ENCODE measurements at regions of chr3 and their contacts with region 1.

Region 1: GRCh38 chr3:175121225-175121624 is 262.1 kb downstream of the NAALADL2 start:
- DNase-seq: peak; percentile 7
- ATAC-seq: peak; percentile 77
- H3K4me3 ChIP-seq: no peak overlapping the region
- H3K27ac ChIP-seq: no peak overlapping the region
- H3K4me1 ChIP-seq: no peaks in the 10 kb centered on the region
- H3K27me3 ChIP-seq: no peaks in the 10 kb centered on the region
- CTCF ChIP-seq: peak; percentile 17 to 80 (median 57); a peak in 5 of 6 replicates
- POLR2A ChIP-seq: no peak
- RAD21 ChIP-seq: peak; percentile 52

Region 2: GRCh38 chr3:174125267-174125824 is 995.9 kb before region 1 on chr3:
- CTCF ChIA-PET with region 1: no interaction called
- POLR2A ChIA-PET with region 1: no interaction called
- RAD21 ChIA-PET with region 1: no interaction called
- intact Hi-C with region 1: loop called (anchors 5 kb)
- DNase-seq: peak; percentile 31
- ATAC-seq: peak; percentile 97
- H3K4me3 ChIP-seq: no peak overlapping the region
- H3K27ac ChIP-seq: no peak overlapping the region
- H3K4me1 ChIP-seq: peaks cover 6 to 9% of the 10 kb centered on the region in 2 experiments; a peak in 3 of 4 replicates
- H3K27me3 ChIP-seq: no peaks in the 10 kb centered on the region
- CTCF ChIP-seq: peak; percentile 55 to 82 (median 71); a peak in 5 of 6 replicates
- POLR2A ChIP-seq: no peak
- RAD21 ChIP-seq: peak; percentile 89

Region 3: DNA sequence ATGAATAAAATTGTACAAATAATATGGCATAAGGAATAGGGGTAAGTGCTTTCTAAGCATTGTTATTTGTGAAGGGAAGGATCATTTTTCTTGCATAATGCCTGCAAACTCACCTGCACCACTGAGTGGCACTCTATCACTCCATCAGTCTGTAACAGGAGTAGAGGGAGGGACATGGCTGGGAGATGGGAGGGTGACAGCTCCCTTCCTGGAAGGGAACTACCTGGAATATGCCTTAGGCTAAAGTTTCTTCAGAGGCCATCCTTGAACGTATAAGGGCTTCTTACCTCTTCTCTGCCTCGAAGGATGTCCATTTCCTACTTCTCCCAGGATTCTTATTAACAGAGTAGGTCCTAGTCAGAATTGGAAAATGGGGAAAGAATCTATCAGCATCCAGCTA is 259.1 kb before region 1 on chr3:
- CTCF ChIA-PET with region 1: interaction called, 6 read pairs
- POLR2A ChIA-PET with region 1: no interaction called
- RAD21 ChIA-PET with region 1: no interaction called
- intact Hi-C with region 1: loop called (anchors 10 kb)
- DNase-seq: peak; percentile 51
- ATAC-seq: peak; percentile 98
- H3K4me3 ChIP-seq: no peak overlapping the region
- H3K27ac ChIP-seq: no peak overlapping the region
- H3K4me1 ChIP-seq: peaks cover 18 to 36% of the 10 kb centered on the region in 2 experiments
- H3K27me3 ChIP-seq: no peaks in the 10 kb centered on the region
- CTCF ChIP-seq: peak; percentile 40 to 71 (median 61); a peak in 5 of 6 replicates
- POLR2A ChIP-seq: no peak
- RAD21 ChIP-seq: peak; percentile 81

Region 4: DNA sequence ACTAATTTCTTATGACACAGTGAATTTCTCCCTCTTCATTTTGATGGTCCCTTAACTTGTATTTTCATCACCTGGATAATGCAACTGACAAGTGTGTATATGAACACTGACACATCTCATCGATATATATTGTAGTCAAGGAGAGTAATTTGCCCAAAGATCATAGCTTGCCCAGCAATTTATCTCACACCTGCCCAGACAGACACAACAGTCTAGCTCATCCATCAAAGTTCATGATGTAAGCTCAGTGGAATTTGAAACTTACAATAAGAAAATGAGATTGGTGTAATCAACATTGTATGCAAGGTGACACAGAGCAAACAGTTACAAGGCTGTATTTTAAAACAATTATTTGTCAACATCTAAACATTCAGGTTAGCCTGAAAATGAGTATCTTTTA is 543.7 kb after region 1 on chr3:
- CTCF ChIA-PET with region 1: no interaction called
- POLR2A ChIA-PET with region 1: no interaction called
- RAD21 ChIA-PET with region 1: no interaction called
- intact Hi-C with region 1: no loop called
- DNase-seq: no peak
- ATAC-seq: no peak
- H3K4me3 ChIP-seq: no peak overlapping the region
- H3K27ac ChIP-seq: no peak overlapping the region
- H3K4me1 ChIP-seq: no peaks in the 10 kb centered on the region
- H3K27me3 ChIP-seq: no peaks in the 10 kb centered on the region
- CTCF ChIP-seq: no peak
- POLR2A ChIP-seq: no peak
- RAD21 ChIP-seq: no peak

Measured in HCT116 (cell line).